ENCODE measurements at regions of chr9 and their contacts with region 1.

Region 1: GRCh38 chr9:133992780-133993634 is 883 bp upstream of the VAV2 start:
- DNase-seq: peak; percentile 62
- H3K4me3 ChIP-seq: peak overlapping the region; percentile 85
- H3K27me3 ChIP-seq: peaks cover 2% of the 10 kb centered on the region; the same call in 1 of the 2 replicates
- CTCF ChIP-seq: peak; percentile 55

Region 2: GRCh38 chr9:133782157-133783130 is 210.6 kb before region 1 on chr9:
- CTCF ChIA-PET with region 1: interaction called, 221 read pairs
- POLR2A ChIA-PET with region 1: no interaction called
- DNase-seq: no peak
- H3K4me3 ChIP-seq: no peak overlapping the region
- H3K27me3 ChIP-seq: no peaks in the 10 kb centered on the region
- CTCF ChIP-seq: peak; percentile 92

Region 3: DNA sequence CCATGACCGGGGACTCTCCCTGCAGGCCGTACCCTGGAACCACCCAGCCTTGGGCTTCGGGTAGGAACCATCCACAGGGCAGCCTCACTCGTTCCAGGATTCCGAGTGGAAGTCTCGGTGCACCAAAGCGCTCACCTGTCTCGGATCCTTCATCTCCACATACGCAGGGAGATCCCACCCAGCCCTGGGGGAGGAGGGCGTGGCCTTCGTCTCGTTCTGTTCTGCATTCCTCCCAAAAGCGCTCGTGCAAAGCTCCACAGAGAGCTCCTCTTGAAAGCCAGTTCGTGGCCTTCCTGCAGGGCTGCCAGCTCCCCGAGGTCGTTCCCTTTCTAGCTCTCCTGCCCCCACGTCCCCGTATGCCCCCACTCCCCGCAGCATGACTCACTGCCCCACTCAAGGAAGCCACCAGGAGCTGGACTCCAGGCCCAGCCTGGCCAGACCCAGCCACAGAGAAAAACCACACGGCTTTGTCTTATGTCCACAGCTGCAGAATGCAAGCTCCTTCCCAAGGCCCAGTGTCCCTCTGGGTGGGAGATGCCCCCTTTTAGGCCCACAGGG is 189.9 kb before region 1 on chr9:
- CTCF ChIA-PET with region 1: interaction called, 221 read pairs
- POLR2A ChIA-PET with region 1: no interaction called
- DNase-seq: no peak
- H3K4me3 ChIP-seq: no peak overlapping the region
- H3K27me3 ChIP-seq: no peaks in the 10 kb centered on the region
- CTCF ChIP-seq: no peak

Region 4: GRCh38 chr9:133955821-133956411 is 37.1 kb before region 1 on chr9:
- CTCF ChIA-PET with region 1: interaction called, 10 read pairs
- POLR2A ChIA-PET with region 1: no interaction called
- DNase-seq: no peak
- H3K4me3 ChIP-seq: no peak overlapping the region
- H3K27me3 ChIP-seq: no peaks in the 10 kb centered on the region
- CTCF ChIP-seq: peak; percentile 44

Region 5: DNA sequence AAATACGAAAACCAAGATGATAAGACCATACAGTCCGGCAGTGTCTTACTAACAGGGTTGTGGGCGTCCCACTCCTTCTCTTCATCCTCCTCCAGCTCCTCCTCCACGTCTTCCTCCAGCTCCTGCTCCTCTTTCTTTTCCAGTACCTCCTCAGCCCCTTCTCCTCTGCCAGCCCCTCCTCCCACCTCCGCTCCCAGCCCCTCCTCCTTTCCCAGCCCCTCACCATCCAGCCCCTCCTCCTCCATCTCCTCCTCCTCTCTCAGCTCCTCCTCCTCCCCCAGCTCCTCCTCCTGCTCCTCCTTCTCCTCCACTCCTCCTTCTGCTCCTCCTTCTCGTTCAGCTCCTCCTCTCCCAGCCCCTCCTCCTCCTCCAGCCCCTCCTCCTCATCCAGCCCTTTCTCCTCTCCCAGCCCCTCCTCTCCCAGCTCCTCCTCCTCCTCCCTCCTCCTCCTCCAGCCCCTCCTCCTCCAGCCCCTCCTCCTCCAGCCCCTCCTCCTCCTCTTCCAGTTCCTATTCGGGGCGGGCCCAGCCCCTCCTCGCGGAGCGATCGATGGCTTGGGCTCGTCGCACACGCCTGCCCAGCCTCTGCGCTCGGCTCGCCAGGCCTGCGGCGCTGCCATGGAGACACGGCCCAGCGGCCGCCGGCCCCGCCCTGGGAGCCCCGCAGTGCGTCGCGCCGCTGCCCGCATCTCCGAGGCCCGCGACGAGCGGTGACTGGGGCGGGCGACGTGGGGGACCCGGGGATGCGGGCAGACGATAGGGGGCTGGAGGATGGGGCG is 32.0 kb after region 1 on chr9 and contains the start of gene BRD3OS:
- CTCF ChIA-PET with region 1: interaction called, 18 read pairs
- POLR2A ChIA-PET with region 1: no interaction called
- DNase-seq: peak; percentile 89
- H3K4me3 ChIP-seq: peak within 1 kb of the TSS; percentile 75
- H3K27me3 ChIP-seq: no peaks in the 10 kb centered on the region
- CTCF ChIP-seq: no peak
- polyA plus RNA-seq, gene BRD3OS: 16.4 and 23.5 TPM in 2 replicates